ENCODE measurements at regions of chrX and their contacts with region 1.

Region 1: GRCh38 chrX:30652527-30653414 is 452 bp upstream of the GK start:
- DNase-seq: peak; percentile 82 to 93 (median 86)
- ATAC-seq: peak; percentile 94
- H3K4me3 ChIP-seq: peak overlapping the region; percentile 88
- H3K4me3 Mint-ChIP-seq: peak overlapping the region; percentile 71 to 95 (median 90)
- H3K27ac ChIP-seq: peak overlapping the region; percentile 80
- H3K27ac Mint-ChIP-seq: peak overlapping the region; percentile 86 to 98 (median 90)
- H3K4me1 ChIP-seq: no peaks in the 10 kb centered on the region
- H3K4me1 Mint-ChIP-seq: peaks cover 0 to 45% (median 16%) of the 10 kb centered on the region in 7 donors
- H3K27me3 ChIP-seq: no peaks in the 10 kb centered on the region
- H3K27me3 Mint-ChIP-seq: no peaks in the 10 kb centered on the region

Region 2: DNA sequence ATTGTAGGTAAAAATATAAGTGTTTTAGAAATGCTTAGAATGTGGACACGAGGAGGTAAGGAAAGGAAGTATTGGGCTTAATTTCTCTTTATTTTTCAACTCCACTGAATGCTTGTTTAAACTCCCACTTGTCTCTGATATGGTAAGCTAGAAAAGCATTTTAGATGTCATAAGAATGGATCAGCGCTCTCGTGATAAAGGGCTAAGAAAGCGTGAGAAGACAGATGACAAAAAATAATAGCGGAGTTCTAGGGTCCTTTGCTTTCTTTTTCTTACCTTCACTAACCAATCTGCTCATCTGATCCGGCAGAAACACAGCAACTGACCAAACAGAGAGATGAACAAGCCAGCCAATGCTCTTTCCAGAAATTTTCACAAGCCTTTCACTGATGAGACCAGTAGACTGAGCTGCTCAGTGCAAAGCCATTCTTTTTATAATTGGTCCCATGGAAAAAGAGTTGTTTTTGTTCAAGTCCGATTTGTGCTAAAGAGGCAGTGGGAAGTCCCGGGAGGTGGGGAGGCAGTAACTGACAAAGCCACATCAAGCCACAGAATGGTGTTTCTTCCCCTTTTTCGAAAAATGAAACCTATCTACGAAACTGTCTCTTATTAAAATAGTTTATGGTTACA is 75.3 kb before region 1 on chrX and contains the start of gene TASL:
- CTCF ChIA-PET with region 1: no interaction called
- POLR2A ChIA-PET with region 1: no interaction called
- intact Hi-C with region 1: loop called (anchors 1 kb)
- DNase-seq: peak in 8 of 9 donors; percentile 23 to 53 (median 30)
- ATAC-seq: peak; percentile 85
- H3K4me3 ChIP-seq: peak within 1 kb of the TSS; percentile 58
- H3K4me3 Mint-ChIP-seq: peak within 1 kb of the TSS; percentile 82 to 96 (median 88)
- H3K27ac ChIP-seq: peak within 1 kb of the TSS; percentile 65
- H3K27ac Mint-ChIP-seq: peak within 1 kb of the TSS; percentile 88 to 99 (median 96)
- H3K4me1 ChIP-seq: no peaks in the 10 kb centered on the region
- H3K4me1 Mint-ChIP-seq: peaks cover 0 to 24% (median 18%) of the 10 kb centered on the region in 7 donors
- H3K27me3 ChIP-seq: no peaks in the 10 kb centered on the region
- H3K27me3 Mint-ChIP-seq: no peaks in the 10 kb centered on the region
- total RNA-seq, gene TASL: 2.1 to 10.5 (median 4.6) TPM

Region 3: GRCh38 chrX:30593435-30594200 is 59.2 kb before region 1 on chrX:
- CTCF ChIA-PET with region 1: no interaction called
- POLR2A ChIA-PET with region 1: no interaction called
- intact Hi-C with region 1: loop called in 1 of 2 experiments (anchors 5 kb)
- DNase-seq: peak in 4 of 9 donors; percentile 24 to 39 (median 25)
- ATAC-seq: no peak
- H3K4me3 ChIP-seq: no peak overlapping the region
- H3K4me3 Mint-ChIP-seq: peak overlapping the region in 1 of 10 donors; percentile 1
- H3K27ac ChIP-seq: no peak overlapping the region
- H3K27ac Mint-ChIP-seq: no peak overlapping the region
- H3K4me1 ChIP-seq: no peaks in the 10 kb centered on the region
- H3K4me1 Mint-ChIP-seq: peaks cover 0 to 22% (median 4%) of the 10 kb centered on the region in 7 donors
- H3K27me3 ChIP-seq: no peaks in the 10 kb centered on the region
- H3K27me3 Mint-ChIP-seq: peaks cover 0 to 3% (median 0%) of the 10 kb centered on the region in 5 donors

Region 4: DNA sequence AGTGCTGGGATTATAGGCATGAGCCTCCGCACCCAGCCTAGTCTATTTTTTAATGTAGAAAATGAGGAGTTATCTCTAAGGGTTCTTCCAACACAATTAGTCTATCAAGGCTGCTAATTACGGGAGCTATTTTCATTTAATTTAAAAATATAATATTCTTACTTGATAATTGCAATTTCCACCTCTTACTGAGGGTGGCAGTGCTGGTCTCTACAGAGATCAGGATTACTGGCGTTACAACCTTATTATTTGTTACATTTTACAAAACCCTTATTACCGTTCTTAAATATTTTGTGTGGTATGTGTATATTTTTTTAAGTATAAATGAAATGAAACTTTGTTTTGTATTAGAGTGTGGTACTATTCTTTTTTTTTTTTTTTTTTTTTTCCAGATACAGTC is 17.1 kb before region 1 on chrX:
- CTCF ChIA-PET with region 1: no interaction called
- POLR2A ChIA-PET with region 1: no interaction called
- intact Hi-C with region 1: loop called in 1 of 2 experiments (anchors 2 kb)
- DNase-seq: peak in 1 of 9 donors; percentile 14
- ATAC-seq: peak; percentile 46
- H3K4me3 ChIP-seq: no peak overlapping the region
- H3K4me3 Mint-ChIP-seq: no peak overlapping the region
- H3K27ac ChIP-seq: no peak overlapping the region
- H3K27ac Mint-ChIP-seq: no peak overlapping the region
- H3K4me1 ChIP-seq: no peaks in the 10 kb centered on the region
- H3K4me1 Mint-ChIP-seq: no peaks in the 10 kb centered on the region
- H3K27me3 ChIP-seq: no peaks in the 10 kb centered on the region
- H3K27me3 Mint-ChIP-seq: no peaks in the 10 kb centered on the region

Region 5: GRCh38 chrX:30713061-30713525 is 60.3 kb after region 1 on chrX:
- CTCF ChIA-PET with region 1: no interaction called
- POLR2A ChIA-PET with region 1: no interaction called
- intact Hi-C with region 1: loop called in 1 of 2 experiments (anchors 1 kb)
- DNase-seq: peak in 6 of 9 donors; percentile 1 to 43 (median 16)
- ATAC-seq: peak; percentile 63
- H3K4me3 ChIP-seq: no peak overlapping the region
- H3K4me3 Mint-ChIP-seq: peak overlapping the region in 1 of 10 donors; percentile 73
- H3K27ac ChIP-seq: no peak overlapping the region
- H3K27ac Mint-ChIP-seq: peak overlapping the region in 2 of 9 donors; percentile 62 to 96
- H3K4me1 ChIP-seq: no peaks in the 10 kb centered on the region
- H3K4me1 Mint-ChIP-seq: peaks cover 0 to 60% (median 6%) of the 10 kb centered on the region in 7 donors
- H3K27me3 ChIP-seq: no peaks in the 10 kb centered on the region
- H3K27me3 Mint-ChIP-seq: no peaks in the 10 kb centered on the region

Region 6: GRCh38 chrX:30831082-30831481 is 178.3 kb after region 1 on chrX:
- CTCF ChIA-PET with region 1: no interaction called
- POLR2A ChIA-PET with region 1: no interaction called
- intact Hi-C with region 1: loop called in 1 of 2 experiments (anchors 2 kb)
- DNase-seq: peak in 8 of 9 donors; percentile 11 to 34 (median 22)
- ATAC-seq: peak; percentile 55
- H3K4me3 ChIP-seq: no peak overlapping the region
- H3K4me3 Mint-ChIP-seq: peak overlapping the region; percentile 72 to 86 (median 82)
- H3K27ac ChIP-seq: peak overlapping the region; percentile 64
- H3K27ac Mint-ChIP-seq: peak overlapping the region; percentile 84 to 95 (median 93)
- H3K4me1 ChIP-seq: no peaks in the 10 kb centered on the region
- H3K4me1 Mint-ChIP-seq: peaks cover 8 to 49% (median 38%) of the 10 kb centered on the region in 7 donors
- H3K27me3 ChIP-seq: no peaks in the 10 kb centered on the region
- H3K27me3 Mint-ChIP-seq: no peaks in the 10 kb centered on the region